PC-9 (cell line): ENCODE measurements at regions of chr2 and their contacts with region 1.

Region 1: GRCh38 chr2:180573958-180574357 is 406.4 kb upstream of the UBE2E3 start:
- DNase-seq: peak; percentile 57 to 98
- H3K4me3 ChIP-seq: no peak overlapping the region; the same call in 1 of the 2 replicates
- H3K27ac ChIP-seq: peak overlapping the region; percentile 52
- H3K4me1 ChIP-seq: peaks cover 36% of the 10 kb centered on the region
- H3K27me3 ChIP-seq: no peaks in the 10 kb centered on the region
- CTCF ChIP-seq: no peak

Region 2: GRCh38 chr2:180495606-180496005 is 78.4 kb before region 1 on chr2:
- CTCF ChIA-PET with region 1: no interaction called
- POLR2A ChIA-PET with region 1: no interaction called
- intact Hi-C with region 1: no loop called
- DNase-seq: no peak
- H3K4me3 ChIP-seq: no peak overlapping the region
- H3K27ac ChIP-seq: no peak overlapping the region
- H3K4me1 ChIP-seq: no peaks in the 10 kb centered on the region
- H3K27me3 ChIP-seq: no peaks in the 10 kb centered on the region
- CTCF ChIP-seq: no peak

Region 3: DNA sequence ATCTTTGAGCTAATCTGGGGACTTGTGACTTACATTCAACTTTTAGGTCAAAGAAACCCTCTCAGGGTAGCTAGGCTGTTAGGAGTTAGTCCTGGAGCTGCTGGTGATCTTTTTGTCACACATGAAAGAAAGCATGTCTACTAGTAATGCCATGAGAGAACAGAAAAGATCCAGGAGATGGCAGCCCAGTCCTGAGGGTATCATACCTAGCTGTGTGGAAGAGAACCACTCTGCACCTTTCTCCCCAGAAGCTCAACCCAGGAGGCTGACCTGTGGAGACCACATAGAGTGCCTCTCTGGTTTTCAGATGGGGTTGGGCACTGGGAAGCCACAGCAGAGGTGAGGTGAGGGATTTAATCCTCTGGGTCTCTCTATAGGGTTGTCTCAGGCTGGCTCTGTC is 53.8 kb before region 1 on chr2:
- CTCF ChIA-PET with region 1: no interaction called
- POLR2A ChIA-PET with region 1: no interaction called
- intact Hi-C with region 1: loop called (anchors 2 kb)
- DNase-seq: peak in 1 of 2 experiments; percentile 27
- H3K4me3 ChIP-seq: no peak overlapping the region
- H3K27ac ChIP-seq: no peak overlapping the region
- H3K4me1 ChIP-seq: peaks cover 55% of the 10 kb centered on the region
- H3K27me3 ChIP-seq: no peaks in the 10 kb centered on the region
- CTCF ChIP-seq: peak; percentile 48

Region 4: GRCh38 chr2:180644709-180645108 is 70.8 kb after region 1 on chr2:
- CTCF ChIA-PET with region 1: no interaction called
- POLR2A ChIA-PET with region 1: no interaction called
- intact Hi-C with region 1: loop called (anchors 5 kb)
- DNase-seq: peak; percentile 17 to 95
- H3K4me3 ChIP-seq: no peak overlapping the region
- H3K27ac ChIP-seq: peak overlapping the region; percentile 52
- H3K4me1 ChIP-seq: peaks cover 19% of the 10 kb centered on the region; the same call in 1 of the 2 replicates
- H3K27me3 ChIP-seq: no peaks in the 10 kb centered on the region
- CTCF ChIP-seq: no peak

Region 5: GRCh38 chr2:180656455-180656847 is 82.5 kb after region 1 on chr2:
- CTCF ChIA-PET with region 1: no interaction called
- POLR2A ChIA-PET with region 1: no interaction called
- intact Hi-C with region 1: loop called (anchors 1 kb)
- DNase-seq: peak; percentile 42 to 93
- H3K4me3 ChIP-seq: no peak overlapping the region
- H3K27ac ChIP-seq: peak overlapping the region; percentile 33
- H3K4me1 ChIP-seq: peaks cover 21% of the 10 kb centered on the region
- H3K27me3 ChIP-seq: no peaks in the 10 kb centered on the region
- CTCF ChIP-seq: no peak

Region 6: GRCh38 chr2:180742809-180743208 is 168.9 kb after region 1 on chr2:
- CTCF ChIA-PET with region 1: no interaction called
- POLR2A ChIA-PET with region 1: no interaction called
- intact Hi-C with region 1: loop called (anchors 1 kb)
- DNase-seq: peak; percentile 32 to 81
- H3K4me3 ChIP-seq: 0 out of 2 replicates have a peak overlapping the region, but pooled peaks have one; percentile 4
- H3K27ac ChIP-seq: peak overlapping the region; percentile 11
- H3K4me1 ChIP-seq: peaks cover 29% of the 10 kb centered on the region
- H3K27me3 ChIP-seq: no peaks in the 10 kb centered on the region
- CTCF ChIP-seq: no peak

Region 7: DNA sequence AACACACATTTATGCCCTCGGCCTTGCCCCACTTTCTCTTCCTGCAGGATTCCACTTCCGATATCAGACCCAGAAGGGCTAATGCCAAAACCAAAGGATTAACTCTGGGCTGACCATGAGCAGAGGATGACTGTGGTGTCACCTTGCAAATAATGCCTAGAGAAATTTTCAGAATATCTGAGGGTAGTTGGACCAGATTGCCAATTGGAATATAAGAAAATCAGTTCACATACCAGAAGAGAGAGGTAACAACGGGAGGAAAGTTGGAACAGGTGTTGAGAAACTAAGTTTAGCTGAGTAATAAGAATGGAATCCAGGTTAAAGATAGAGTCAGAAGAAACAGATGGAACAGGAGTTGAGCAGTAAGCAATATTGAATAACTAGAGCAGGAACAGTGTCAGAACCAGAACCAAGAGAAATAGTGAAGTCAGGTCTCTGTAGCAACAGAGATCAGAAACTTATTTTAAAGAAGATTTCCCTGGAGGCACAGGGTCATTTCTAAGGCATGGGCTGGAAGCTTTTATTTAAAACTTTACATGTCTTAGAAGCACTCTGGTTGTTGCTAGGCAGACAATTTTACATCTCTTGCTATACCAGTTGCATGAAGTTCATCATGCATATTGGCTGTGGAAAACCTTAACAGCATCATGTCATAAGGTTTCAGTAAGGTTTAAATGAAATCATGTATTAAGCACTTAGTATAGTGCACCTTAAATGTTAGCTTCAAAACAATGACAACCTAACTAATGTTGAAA is 173.9 kb after region 1 on chr2:
- CTCF ChIA-PET with region 1: no interaction called
- POLR2A ChIA-PET with region 1: no interaction called
- intact Hi-C with region 1: loop called (anchors 1 kb)
- DNase-seq: peak; percentile 67 to 95
- H3K4me3 ChIP-seq: peak overlapping the region; percentile 6; the same call in 1 of the 2 replicates
- H3K27ac ChIP-seq: peak overlapping the region; percentile 49
- H3K4me1 ChIP-seq: peaks cover 26% of the 10 kb centered on the region
- H3K27me3 ChIP-seq: no peaks in the 10 kb centered on the region
- CTCF ChIP-seq: no peak

Region 8: GRCh38 chr2:181483876-181484275 is 909.9 kb after region 1 on chr2:
- CTCF ChIA-PET with region 1: no interaction called
- POLR2A ChIA-PET with region 1: no interaction called
- intact Hi-C with region 1: no loop called
- DNase-seq: no peak
- H3K4me3 ChIP-seq: no peak overlapping the region
- H3K27ac ChIP-seq: no peak overlapping the region
- H3K4me1 ChIP-seq: no peaks in the 10 kb centered on the region
- H3K27me3 ChIP-seq: no peaks in the 10 kb centered on the region
- CTCF ChIP-seq: no peak